Caco-2 (cell line): ENCODE measurements at regions of chr13 and their contacts with region 1.

Region 1: DNA sequence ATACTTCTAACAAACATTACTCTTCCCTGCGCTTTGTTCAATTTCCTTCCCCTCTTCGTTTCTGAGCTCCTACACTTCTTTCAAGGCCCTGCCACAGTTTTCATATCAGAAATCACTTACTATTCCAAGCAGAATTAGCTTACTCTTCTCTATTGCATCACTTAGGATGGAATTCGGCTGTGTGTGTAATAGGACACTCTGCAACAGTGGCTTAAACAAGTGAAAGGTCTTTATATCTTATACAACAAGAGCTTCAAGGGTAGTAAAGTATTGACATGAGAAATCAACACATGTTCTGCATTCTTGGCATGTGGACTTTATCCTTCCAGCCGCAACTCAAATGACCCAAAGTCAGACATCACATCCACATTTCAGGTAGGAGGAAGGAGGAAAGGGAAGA is 279.6 kb downstream of the PCDH20 start:
- DNase-seq: peak; percentile 35 to 40
- H3K4me3 ChIP-seq: no peak overlapping the region
- H3K4me3 Mint-ChIP-seq: peak overlapping the region; percentile 50
- H3K27ac Mint-ChIP-seq: peak overlapping the region; percentile 76
- H3K4me1 ChIP-seq: peaks cover 15% of the 10 kb centered on the region
- H3K4me1 Mint-ChIP-seq: peaks cover 24% of the 10 kb centered on the region
- H3K27me3 ChIP-seq: no peaks in the 10 kb centered on the region
- H3K27me3 Mint-ChIP-seq: no peaks in the 10 kb centered on the region
- CTCF ChIP-seq: no peak

Region 2: GRCh38 chr13:61148691-61149315 is 12.7 kb after region 1 on chr13:
- CTCF ChIA-PET with region 1: no interaction called
- POLR2A ChIA-PET with region 1: no interaction called
- intact Hi-C with region 1: loop called (anchors 1 kb)
- DNase-seq: no peak
- H3K4me3 ChIP-seq: no peak overlapping the region
- H3K4me3 Mint-ChIP-seq: no peak overlapping the region
- H3K27ac Mint-ChIP-seq: no peak overlapping the region
- H3K4me1 ChIP-seq: peaks cover 8% of the 10 kb centered on the region; the same call in 1 of the 2 replicates
- H3K4me1 Mint-ChIP-seq: peaks cover 17% of the 10 kb centered on the region
- H3K27me3 ChIP-seq: no peaks in the 10 kb centered on the region
- H3K27me3 Mint-ChIP-seq: no peaks in the 10 kb centered on the region
- CTCF ChIP-seq: no peak

Region 3: DNA sequence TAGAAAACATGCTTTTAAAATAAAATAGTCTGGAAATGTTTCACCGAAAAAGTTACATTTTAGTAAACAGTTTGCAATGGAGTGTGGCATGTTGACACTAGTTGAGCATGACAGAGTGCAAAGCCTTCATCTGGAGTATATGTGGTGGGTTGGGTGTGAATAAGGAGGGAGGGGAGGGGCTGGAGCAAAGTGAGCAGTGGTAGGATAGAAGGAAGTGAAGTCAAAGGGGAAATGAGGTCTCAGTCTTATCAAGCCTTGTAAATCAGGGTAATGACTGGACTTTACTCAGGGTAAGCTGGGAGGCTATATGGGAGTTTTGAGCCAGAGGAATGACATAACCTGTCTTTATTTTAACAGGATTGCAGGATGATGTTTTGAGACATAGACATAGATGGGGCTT is 56.7 kb after region 1 on chr13:
- CTCF ChIA-PET with region 1: no interaction called
- POLR2A ChIA-PET with region 1: no interaction called
- intact Hi-C with region 1: loop called (anchors 1 kb)
- DNase-seq: peak; percentile 49 to 65
- H3K4me3 ChIP-seq: no peak overlapping the region
- H3K4me3 Mint-ChIP-seq: no peak overlapping the region
- H3K27ac Mint-ChIP-seq: peak overlapping the region; percentile 43
- H3K4me1 ChIP-seq: peaks cover 26% of the 10 kb centered on the region
- H3K4me1 Mint-ChIP-seq: peaks cover 13% of the 10 kb centered on the region
- H3K27me3 ChIP-seq: no peaks in the 10 kb centered on the region
- H3K27me3 Mint-ChIP-seq: no peaks in the 10 kb centered on the region
- CTCF ChIP-seq: no peak